ENCODE measurements at regions of chr10 and their contacts with region 1.

Region 1: GRCh38 chr10:93080350-93081046 is 6.8 kb downstream of the CYP26A1 start:
- DNase-seq: no peak
- H3K4me3 ChIP-seq: no peak overlapping the region; the same call in 1 of the 2 replicates
- CTCF ChIP-seq: peak; percentile 85

Region 2: GRCh38 chr10:93062514-93063143 is 17.9 kb before region 1 on chr10:
- CTCF ChIA-PET with region 1: interaction called, 23 read pairs
- POLR2A ChIA-PET with region 1: interaction called, 3 read pairs
- DNase-seq: no peak
- H3K4me3 ChIP-seq: peak overlapping the region; percentile 50
- CTCF ChIP-seq: peak; percentile 62

Region 3: GRCh38 chr10:93106631-93107072 is 26.2 kb after region 1 on chr10:
- CTCF ChIA-PET with region 1: interaction called, 10 read pairs
- POLR2A ChIA-PET with region 1: no interaction called
- DNase-seq: peak; percentile 58
- H3K4me3 ChIP-seq: no peak overlapping the region
- CTCF ChIP-seq: no peak

Region 4: DNA sequence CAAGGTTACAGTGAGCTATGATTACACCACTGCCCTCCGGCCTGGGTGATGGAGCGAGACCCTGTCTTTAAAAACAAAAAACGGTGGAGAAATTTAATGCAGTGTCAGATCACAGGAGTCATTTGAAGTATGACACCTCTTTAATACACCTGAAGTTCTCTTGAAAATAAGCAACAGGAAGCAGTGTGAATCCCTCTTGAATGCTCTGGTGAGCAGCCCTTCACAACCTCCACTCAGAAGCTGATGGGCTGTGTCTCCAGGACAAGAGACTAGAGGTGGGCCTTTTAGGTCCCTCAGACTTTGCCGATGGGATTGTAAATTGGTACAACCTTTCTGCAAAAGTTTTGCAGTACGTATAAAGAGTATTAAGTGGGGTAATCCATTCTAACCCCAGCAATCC is 43.3 kb after region 1 on chr10:
- CTCF ChIA-PET with region 1: no interaction called
- POLR2A ChIA-PET with region 1: no interaction called
- DNase-seq: no peak
- H3K4me3 ChIP-seq: no peak overlapping the region
- CTCF ChIP-seq: no peak

Region 5: DNA sequence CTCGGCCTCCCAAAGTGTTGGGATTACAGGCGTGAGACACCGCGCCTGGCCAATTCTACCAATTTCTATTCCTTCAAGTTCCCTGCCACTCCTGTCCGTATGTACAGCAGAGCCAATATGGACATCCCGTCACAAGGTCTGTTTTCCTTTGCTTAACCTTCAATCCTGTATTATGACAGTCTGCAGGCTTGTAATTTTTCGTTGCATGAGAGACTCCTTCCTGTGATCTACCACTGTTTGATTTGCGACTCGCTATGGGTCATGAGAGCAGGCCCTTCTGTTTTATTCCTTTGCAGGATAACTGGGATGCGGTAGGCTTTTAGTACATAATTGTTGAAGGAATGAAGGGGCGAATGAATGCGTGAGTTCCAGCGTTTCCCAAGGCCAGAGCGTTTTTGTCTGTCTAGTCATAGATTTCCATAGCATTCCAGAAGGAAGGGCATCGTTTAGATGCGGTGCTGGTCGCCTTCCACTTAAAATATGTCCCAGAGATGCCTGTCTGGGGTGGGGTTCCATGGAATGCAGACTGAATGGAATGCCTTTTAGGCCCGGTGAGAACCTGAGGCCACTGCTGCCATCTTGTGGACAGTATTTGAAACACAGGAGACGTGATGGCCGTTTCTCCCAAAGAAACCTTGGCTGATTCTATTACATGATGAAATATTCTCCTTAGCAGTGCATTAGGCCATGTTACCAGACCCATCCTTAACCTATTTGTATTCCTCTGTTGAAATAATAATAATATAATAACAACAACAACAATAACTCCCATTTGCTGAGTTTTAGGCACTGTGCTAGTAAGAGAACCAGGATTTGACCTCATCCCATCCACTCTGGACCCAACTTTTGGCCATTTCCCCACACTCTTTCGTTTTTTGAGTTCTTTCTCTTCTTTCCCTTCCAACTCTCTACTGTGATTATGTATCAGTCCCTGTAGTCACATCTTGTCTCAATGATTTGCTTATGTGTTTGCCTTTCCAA is 208.4 kb after region 1 on chr10:
- CTCF ChIA-PET with region 1: interaction called, 85 read pairs
- POLR2A ChIA-PET with region 1: no interaction called
- DNase-seq: peak; percentile 89
- H3K4me3 ChIP-seq: no peak overlapping the region
- CTCF ChIP-seq: peak; percentile 73

Region 6: GRCh38 chr10:93334901-93335327 is 254.4 kb after region 1 on chr10:
- CTCF ChIA-PET with region 1: interaction called, 13 read pairs
- POLR2A ChIA-PET with region 1: no interaction called
- DNase-seq: peak; percentile 33
- H3K4me3 ChIP-seq: no peak overlapping the region
- CTCF ChIP-seq: no peak

Region 7: DNA sequence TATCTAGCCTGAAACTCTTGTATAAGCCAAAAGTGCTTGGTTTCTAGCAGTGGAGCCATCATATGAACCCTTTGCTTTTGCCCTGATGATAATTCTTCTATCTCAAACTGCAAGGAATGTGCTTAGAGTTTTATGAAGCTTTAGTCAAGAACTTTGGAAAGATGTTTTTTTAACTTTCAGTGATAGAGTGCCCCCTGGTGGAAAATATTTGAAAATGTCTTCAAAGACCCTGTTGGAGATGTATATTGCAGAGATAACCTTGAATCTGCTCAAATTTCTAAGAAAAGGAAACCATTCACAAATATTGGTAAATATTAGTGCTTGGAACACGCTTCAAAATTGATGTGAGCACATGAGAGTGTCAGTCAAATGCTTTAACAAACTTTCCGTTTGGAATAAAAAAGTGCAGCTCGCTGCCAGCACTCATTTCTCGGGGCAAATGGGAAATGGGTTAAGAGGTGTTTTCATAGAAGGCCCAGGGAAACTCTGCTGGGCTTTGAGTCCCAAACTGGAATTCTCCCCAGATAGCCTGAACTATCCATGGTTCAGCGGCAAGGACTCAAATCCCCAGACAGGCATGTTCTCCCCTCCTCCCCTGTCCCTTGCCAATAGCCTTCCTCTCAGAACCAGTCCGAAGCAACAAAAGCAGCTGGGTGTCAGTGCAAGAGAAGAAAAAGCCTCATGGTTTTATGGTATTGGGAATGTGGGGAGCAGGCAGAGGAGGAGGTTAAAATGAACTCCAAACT is 272.3 kb after region 1 on chr10:
- CTCF ChIA-PET with region 1: interaction called, 27 read pairs
- POLR2A ChIA-PET with region 1: no interaction called
- DNase-seq: no peak
- H3K4me3 ChIP-seq: no peak overlapping the region
- CTCF ChIP-seq: peak; percentile 17

Measured in AG04449 (cell line).